Astrocyte of the cerebellum (primary cell): ENCODE measurements at regions of chr7 and their contacts with region 1.

Region 1: DNA sequence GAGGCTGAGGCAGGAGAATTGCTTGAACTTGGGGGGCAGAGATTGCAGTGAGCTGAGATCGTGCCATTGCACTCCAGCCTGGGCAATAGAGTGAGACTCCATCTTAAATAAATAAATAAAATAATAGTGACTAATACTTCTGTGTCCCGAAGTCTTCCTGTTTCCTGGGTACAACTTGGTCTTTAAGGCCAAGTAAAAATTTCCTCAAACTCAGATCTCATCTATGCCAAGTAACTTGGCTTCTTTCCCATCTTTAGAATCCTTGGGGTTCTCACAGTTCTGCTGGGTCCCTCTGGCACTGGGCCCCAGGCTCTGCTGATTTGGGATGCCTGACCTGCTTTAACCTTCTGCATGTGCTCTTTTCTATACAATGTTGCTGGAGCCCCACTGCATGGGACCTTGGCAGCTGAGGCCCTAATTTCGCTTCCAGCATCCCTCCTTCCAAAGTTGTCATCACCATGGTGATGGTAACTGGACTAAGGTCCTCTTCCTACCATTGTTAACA is 22.7 kb upstream of the AKR1B10 start:
- DNase-seq: no peak
- H3K4me3 ChIP-seq: no peak overlapping the region
- CTCF ChIP-seq: no peak

Region 2: DNA sequence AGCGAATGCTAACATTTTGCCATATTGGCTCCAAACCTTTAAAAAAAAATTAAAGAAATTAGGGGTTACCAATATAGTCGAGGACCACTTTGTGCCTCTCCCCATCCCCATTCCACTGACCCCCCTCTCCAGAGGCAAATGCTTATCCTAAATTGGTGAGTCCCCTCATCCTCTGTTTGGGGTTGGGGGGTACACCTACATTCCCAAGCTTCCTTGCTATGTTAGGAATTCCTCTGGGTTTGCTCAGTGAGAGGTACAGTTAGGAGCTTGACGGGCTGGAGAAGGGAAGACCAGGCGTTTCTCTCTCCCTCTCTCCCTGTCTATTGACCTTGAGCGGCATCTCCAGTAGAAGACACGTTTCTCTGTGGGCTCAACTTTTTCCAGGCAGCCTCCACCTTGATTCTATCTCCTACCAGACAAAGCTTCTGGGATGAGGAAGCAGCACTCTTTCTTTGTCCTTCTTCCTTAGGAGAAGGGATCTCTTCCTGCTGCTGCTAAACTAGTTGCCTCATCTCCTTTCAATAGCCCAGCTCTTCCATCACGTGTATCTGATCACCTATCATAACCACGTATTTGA is 37.6 kb after region 1 on chr7:
- in situ Hi-C with region 1: loop called (anchors 5 kb)
- DNase-seq: no peak
- H3K4me3 ChIP-seq: no peak overlapping the region
- CTCF ChIP-seq: no peak